PC-3 (cell line): ENCODE measurements at regions of chr3 and their contacts with region 1.

Region 1: GRCh38 chr3:177816667-177817208 is 619.5 kb upstream of the TBL1XR1 start:
- DNase-seq: peak; percentile 99
- ATAC-seq: peak; percentile 89
- H3K4me3 ChIP-seq: no peak overlapping the region
- H3K27ac ChIP-seq: peak overlapping the region; percentile 57
- H3K4me1 ChIP-seq: peaks cover 35% of the 10 kb centered on the region
- H3K27me3 ChIP-seq: no peaks in the 10 kb centered on the region
- CTCF ChIP-seq: peak; percentile 65

Region 2: GRCh38 chr3:177597311-177598096 is 219.2 kb before region 1 on chr3:
- CTCF ChIA-PET with region 1: no interaction called
- POLR2A ChIA-PET with region 1: no interaction called
- intact Hi-C with region 1: loop called (anchors 10 kb)
- DNase-seq: no peak
- ATAC-seq: no peak
- H3K4me3 ChIP-seq: no peak overlapping the region
- H3K27ac ChIP-seq: peak overlapping the region; percentile 78
- H3K4me1 ChIP-seq: peaks cover 60% of the 10 kb centered on the region
- H3K27me3 ChIP-seq: no peaks in the 10 kb centered on the region
- CTCF ChIP-seq: no peak

Region 3: DNA sequence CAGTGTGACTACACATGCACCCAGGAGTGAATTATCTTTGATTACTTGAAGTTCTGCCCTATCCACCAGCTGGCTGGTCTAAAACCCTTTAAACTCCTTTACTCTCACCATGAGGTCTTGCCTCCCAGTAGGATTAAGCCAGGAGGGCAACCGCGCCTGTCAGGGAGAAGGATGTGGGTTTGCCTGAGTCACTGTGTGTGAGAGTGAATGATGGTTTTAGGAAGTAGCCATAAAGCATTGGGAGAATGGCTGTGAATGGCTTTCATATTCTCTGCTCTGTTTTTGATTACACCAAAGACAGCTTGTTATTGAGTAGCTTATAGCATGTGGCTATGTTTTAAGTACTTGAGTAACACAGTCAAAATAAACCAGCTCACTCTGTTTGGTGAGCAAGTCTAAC is 18.3 kb after region 1 on chr3:
- CTCF ChIA-PET with region 1: no interaction called
- POLR2A ChIA-PET with region 1: no interaction called
- intact Hi-C with region 1: no loop called
- DNase-seq: peak; percentile 92
- ATAC-seq: peak; percentile 96
- H3K4me3 ChIP-seq: no peak overlapping the region
- H3K27ac ChIP-seq: peak overlapping the region; percentile 40
- H3K4me1 ChIP-seq: peaks cover 34% of the 10 kb centered on the region
- H3K27me3 ChIP-seq: no peaks in the 10 kb centered on the region
- CTCF ChIP-seq: no peak

Region 4: DNA sequence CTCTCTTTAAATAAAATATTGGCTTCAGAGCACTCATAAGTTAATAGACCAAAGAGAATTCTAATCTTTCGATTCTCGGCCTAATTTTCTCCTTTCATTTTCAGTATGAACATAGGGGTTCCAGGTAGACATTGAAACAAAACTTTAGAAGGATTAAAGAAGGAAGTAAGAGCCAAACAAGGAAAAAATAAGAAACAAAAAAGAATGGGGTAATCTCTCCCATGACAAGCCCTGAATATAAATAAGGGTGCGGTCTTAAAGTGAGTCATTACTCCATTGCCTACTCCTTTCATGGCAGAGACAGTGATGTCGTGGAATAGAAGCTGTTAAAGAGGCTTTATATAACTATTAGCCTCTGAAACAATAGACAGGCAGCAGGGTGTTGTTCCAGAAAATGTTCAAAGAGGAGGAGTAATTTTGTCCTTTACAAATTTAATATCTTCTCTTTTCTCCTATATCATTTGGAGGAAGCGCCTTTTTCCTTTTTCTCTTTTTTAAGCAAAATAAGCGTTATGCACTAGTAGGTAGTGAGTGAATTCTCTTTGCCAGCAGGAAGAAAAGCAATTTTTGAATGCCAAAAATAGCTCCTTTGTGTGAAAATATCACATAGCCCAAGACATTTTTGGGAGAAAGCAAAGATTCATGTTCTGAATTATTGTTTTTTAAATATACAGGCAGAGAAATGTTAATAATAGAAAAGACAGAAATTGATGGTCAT is 111.6 kb after region 1 on chr3:
- CTCF ChIA-PET with region 1: no interaction called
- POLR2A ChIA-PET with region 1: no interaction called
- intact Hi-C with region 1: loop called (anchors 1 kb)
- DNase-seq: peak; percentile 82
- ATAC-seq: peak; percentile 69
- H3K4me3 ChIP-seq: no peak overlapping the region
- H3K27ac ChIP-seq: peak overlapping the region; percentile 96
- H3K4me1 ChIP-seq: peaks cover 60% of the 10 kb centered on the region
- H3K27me3 ChIP-seq: no peaks in the 10 kb centered on the region
- CTCF ChIP-seq: no peak

Region 5: GRCh38 chr3:178146406-178146831 is 329.7 kb after region 1 on chr3:
- CTCF ChIA-PET with region 1: no interaction called
- POLR2A ChIA-PET with region 1: no interaction called
- intact Hi-C with region 1: loop called (anchors 10 kb)
- DNase-seq: peak; percentile 41
- ATAC-seq: peak; percentile 49
- H3K4me3 ChIP-seq: no peak overlapping the region
- H3K27ac ChIP-seq: no peak overlapping the region
- H3K4me1 ChIP-seq: peaks cover 5% of the 10 kb centered on the region; the same call in 1 of the 2 replicates
- H3K27me3 ChIP-seq: no peaks in the 10 kb centered on the region
- CTCF ChIP-seq: no peak